Aorta (tissue), 5 donors: ENCODE measurements at regions of chr1 and their contacts with region 1.

Region 1: GRCh38 chr1:235328357-235329138 is at the start of gene GGPS1:
- DNase-seq: peak; percentile 98 to 99
- ATAC-seq: peak; percentile 98
- H3K4me3 ChIP-seq: peak within 1 kb of the TSS; percentile 96 to 99
- H3K27ac ChIP-seq: peak within 1 kb of the TSS; percentile 73 to 99
- H3K4me1 ChIP-seq: no peaks in the 10 kb centered on the region
- H3K27me3 ChIP-seq: no peaks in the 10 kb centered on the region
- total RNA-seq, gene GGPS1: 24.1 to 29.0 TPM

Region 2: DNA sequence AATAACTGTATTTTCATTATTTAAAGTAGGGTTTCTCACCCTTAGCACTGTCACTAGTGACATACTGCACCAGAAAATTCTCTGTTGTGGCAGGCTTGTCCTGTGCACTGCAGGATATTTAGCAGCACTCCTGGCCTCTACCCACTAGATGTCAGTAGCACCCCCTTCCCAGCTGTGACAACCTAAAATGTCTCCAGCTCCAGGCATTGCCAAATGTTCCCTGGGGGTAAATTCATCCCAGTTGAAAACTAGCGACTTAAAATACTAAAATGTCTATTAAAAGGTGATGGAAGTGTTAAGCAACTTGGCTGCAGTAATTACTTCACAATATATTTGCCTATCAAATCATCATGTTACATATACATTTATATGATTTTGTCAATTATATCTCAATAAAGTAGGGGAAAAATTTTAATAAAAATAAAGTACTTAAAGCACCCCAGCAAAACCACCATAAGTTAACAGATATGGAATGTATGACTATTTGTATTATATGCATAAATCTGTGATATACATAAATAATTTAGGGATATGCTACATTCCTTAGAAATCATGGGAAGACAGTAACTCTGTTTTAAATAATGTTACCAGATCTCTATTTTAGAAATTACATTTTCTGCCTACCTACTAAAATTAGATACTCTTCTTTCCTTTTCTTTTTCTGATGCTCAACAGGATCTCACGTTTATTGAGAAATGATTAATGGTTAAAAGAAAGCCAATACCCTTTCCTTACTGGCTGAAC is 75.2 kb before region 1 on chr1:
- intact Hi-C with region 1: loop called (anchors 5 kb)
- DNase-seq: peak in 1 of 2 donors; percentile 64
- ATAC-seq: peak; percentile 83
- H3K4me3 ChIP-seq: no peak overlapping the region
- H3K27ac ChIP-seq: no peak overlapping the region
- H3K4me1 ChIP-seq: no peaks in the 10 kb centered on the region
- H3K27me3 ChIP-seq: no peaks in the 10 kb centered on the region

Region 3: DNA sequence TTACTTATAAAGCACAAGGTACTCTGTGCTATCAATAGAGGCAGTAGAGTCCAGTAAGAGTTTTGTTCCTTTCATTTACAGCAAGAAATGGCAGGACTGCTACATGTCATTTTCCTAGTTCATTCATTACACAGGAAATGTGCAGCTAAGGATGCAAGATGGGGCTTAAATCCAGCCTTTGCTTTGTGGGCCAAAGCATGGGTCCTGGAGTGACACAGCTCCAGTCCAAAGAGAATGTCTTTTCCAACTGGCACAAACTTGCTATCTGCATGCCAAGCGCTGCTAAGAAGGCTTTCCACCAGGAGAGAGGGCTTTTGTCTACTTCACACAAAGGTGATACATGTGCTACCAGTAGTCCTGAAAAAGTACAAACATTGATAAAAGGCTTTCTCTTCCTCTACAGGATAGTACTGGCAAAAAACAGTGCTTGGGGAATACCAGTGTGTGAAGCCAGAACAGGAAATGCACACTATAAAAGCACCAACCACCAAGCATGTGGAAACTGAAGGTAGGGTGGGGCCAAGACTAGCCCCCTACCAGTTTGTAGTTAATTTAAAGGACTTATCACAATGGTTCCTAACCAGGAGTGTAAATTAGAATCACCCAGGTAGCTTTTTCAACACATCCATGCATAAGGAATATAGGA is 69.3 kb before region 1 on chr1:
- intact Hi-C with region 1: loop called (anchors 5 kb)
- DNase-seq: no peak
- ATAC-seq: no peak
- H3K4me3 ChIP-seq: no peak overlapping the region
- H3K27ac ChIP-seq: no peak overlapping the region
- H3K4me1 ChIP-seq: peaks cover 0 to 1% of the 10 kb centered on the region in 2 donors
- H3K27me3 ChIP-seq: no peaks in the 10 kb centered on the region

Region 4: DNA sequence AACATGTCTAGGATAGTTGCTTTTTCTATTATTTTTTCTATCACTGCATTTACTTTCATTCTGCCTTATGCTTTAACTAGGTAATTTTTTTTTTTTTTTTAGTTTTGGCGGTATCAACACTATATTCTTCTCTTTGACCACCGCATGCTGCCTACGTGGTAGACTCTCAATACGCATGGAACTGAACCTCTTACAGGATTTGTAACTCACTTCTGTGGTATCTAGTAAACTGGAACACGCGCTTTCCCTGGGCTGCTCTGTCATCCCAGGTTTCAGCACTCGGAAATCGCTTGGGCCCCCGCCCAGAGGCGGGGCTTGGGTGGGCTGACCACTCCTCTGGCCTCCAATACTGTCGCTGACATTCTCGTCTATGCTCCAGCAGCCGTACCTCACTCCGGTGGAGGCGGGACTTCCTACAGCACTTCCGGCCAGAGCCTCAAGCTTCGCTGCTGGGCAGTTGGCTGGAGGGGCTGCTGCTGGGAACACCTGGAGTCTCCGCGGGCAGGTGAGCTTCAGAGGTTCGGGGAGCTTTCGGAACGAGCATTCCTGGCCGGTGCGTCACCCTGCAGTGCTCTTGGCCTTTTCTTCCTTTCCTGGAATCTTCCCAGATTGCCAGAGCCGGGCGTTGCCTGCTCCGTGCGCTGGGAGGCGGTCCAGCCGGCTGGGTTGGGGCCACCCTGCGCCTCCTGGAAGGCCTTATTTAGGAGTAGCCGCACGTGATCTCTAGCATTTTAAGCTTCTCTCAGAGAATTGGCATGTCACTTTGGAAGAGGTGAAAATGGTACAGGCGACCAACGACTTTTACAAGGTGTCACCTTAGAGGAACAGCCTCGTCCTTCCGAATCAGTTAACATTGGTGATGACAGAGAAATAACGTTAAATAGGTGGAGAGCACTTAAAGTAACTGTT is 38.7 kb after region 1 on chr1 and contains the start of gene TBCE:
- intact Hi-C with region 1: loop called (anchors 2 kb)
- DNase-seq: peak; percentile 98 to 100
- ATAC-seq: peak; percentile 99
- H3K4me3 ChIP-seq: peak within 1 kb of the TSS; percentile 51 to 84
- H3K27ac ChIP-seq: peak within 1 kb of the TSS in 1 of 2 donors; percentile 29
- H3K4me1 ChIP-seq: no peaks in the 10 kb centered on the region
- H3K27me3 ChIP-seq: no peaks in the 10 kb centered on the region
- total RNA-seq, gene TBCE: 22.2 to 23.2 TPM

Region 5: GRCh38 chr1:235415008-235415904 is 86.7 kb after region 1 on chr1:
- intact Hi-C with region 1: loop called in 1 of 2 experiments (anchors 1 kb)
- DNase-seq: peak in 1 of 2 donors; percentile 72
- ATAC-seq: peak; percentile 73
- H3K4me3 ChIP-seq: no peak overlapping the region
- H3K27ac ChIP-seq: no peak overlapping the region
- H3K4me1 ChIP-seq: no peaks in the 10 kb centered on the region
- H3K27me3 ChIP-seq: no peaks in the 10 kb centered on the region

Region 6: GRCh38 chr1:235430991-235431390 is 102.4 kb after region 1 on chr1:
- intact Hi-C with region 1: no loop called
- DNase-seq: no peak
- ATAC-seq: no peak
- H3K4me3 ChIP-seq: no peak overlapping the region
- H3K27ac ChIP-seq: no peak overlapping the region
- H3K4me1 ChIP-seq: no peaks in the 10 kb centered on the region
- H3K27me3 ChIP-seq: no peaks in the 10 kb centered on the region

Region 7: GRCh38 chr1:235504496-235505222 is 176.1 kb after region 1 on chr1:
- intact Hi-C with region 1: loop called in 1 of 2 experiments (anchors 10 kb)
- DNase-seq: peak; percentile 99 to 100
- ATAC-seq: peak; percentile 98
- H3K4me3 ChIP-seq: peak overlapping the region; percentile 46 to 96
- H3K27ac ChIP-seq: peak overlapping the region; percentile 93 to 96
- H3K4me1 ChIP-seq: peaks cover 0 to 4% of the 10 kb centered on the region in 2 donors
- H3K27me3 ChIP-seq: no peaks in the 10 kb centered on the region